ENCODE measurements at regions of chr1 and their contacts with region 1.

Region 1: DNA sequence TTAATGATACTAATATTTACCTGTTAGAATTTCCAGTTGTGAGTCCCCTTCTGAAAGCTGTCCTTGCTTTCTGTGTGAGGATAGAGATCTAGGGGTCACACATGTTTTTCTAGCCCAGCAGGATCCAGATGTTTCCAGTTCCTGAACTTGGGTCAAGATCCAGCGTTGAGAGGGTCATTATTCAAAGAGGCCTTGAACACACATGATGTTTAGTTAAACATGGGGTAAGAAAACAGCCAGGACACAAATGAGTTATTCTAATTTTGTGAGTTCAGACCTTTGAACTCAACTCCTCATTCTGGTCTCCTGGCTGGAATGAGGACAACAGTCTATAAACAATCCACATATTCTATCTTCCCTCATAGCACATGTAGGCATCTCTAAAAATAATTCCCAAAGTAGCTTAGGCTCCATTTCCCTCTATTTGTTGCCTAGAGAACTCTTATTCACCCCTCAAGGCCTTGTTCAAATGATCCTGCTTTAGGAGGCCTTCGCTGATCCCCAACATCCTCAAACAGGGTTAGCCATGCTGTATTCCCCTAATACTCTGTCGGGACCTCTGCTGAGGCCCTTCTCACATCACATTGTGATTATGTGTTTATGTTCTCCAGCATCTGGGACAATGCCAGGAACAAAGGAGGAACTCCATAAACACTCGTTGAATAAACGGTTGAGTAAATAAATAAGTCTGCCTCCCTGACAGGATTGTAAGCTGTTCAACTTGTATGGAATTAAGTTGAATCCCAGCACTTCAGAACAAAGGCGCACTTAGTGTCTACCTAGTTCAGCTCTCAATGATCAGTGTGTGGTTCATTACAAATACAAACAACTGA is 15.0 kb upstream of the KCNN3 start:
- DNase-seq: no peak
- ATAC-seq: 0 out of 2 replicates have a peak, but pooled peaks have one; percentile 13
- H3K4me3 ChIP-seq: no peak overlapping the region
- H3K27ac ChIP-seq: no peak overlapping the region
- H3K4me1 ChIP-seq: no peaks in the 10 kb centered on the region
- H3K27me3 ChIP-seq: peaks cover 9% of the 10 kb centered on the region; the same call in 1 of the 2 replicates
- CTCF ChIP-seq: no peak

Region 2: GRCh38 chr1:154716614-154717372 is 168.3 kb before region 1 on chr1:
- CTCF ChIA-PET with region 1: no interaction called
- POLR2A ChIA-PET with region 1: interaction called, 24 read pairs
- intact Hi-C with region 1: no loop called
- DNase-seq: no peak
- ATAC-seq: no peak
- H3K4me3 ChIP-seq: no peak overlapping the region
- H3K27ac ChIP-seq: no peak overlapping the region
- H3K4me1 ChIP-seq: no peaks in the 10 kb centered on the region
- H3K27me3 ChIP-seq: peaks cover 9% of the 10 kb centered on the region; the same call in 1 of the 2 replicates
- CTCF ChIP-seq: no peak

Region 3: GRCh38 chr1:154831462-154831861 is 53.6 kb before region 1 on chr1:
- CTCF ChIA-PET with region 1: interaction called, 11 read pairs
- POLR2A ChIA-PET with region 1: no interaction called
- intact Hi-C with region 1: no loop called
- DNase-seq: no peak
- ATAC-seq: no peak
- H3K4me3 ChIP-seq: no peak overlapping the region
- H3K27ac ChIP-seq: no peak overlapping the region
- H3K4me1 ChIP-seq: no peaks in the 10 kb centered on the region
- H3K27me3 ChIP-seq: peaks cover 95% of the 10 kb centered on the region
- CTCF ChIP-seq: no peak